Common myeloid progenitor, CD34-positive (primary cell): ENCODE measurements at regions of chr16 and their contacts with region 1.

Region 1: DNA sequence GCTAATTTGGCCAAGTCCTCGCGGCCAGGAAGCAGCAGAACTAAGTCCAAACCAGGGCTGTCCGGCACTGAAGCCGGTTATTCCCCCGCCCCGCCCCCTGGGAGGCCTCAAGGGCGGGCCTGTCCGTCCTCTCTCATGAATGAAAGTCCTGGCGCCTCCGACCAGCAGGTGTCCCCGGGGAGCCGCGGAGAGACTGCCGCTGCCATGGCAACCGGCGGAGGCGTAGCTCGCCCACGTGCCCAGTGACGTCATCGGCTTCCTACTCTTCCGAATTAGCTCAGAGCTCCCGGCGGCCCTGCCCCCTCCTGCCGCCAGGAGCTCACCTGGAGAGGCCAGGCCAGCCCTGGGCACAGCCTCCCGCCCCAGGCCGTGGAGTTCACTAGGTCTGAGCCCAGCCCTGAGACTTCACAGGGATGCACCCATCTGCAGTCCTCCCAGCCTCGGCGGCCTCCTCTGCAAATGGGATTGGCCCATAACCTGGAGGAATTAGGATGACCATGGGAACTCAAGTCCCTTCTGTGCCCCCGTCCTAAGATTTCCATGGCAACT is 1.3 kb downstream of the SPATA2L start:
- DNase-seq: peak; percentile 93 to 96 (median 95)
- H3K4me3 ChIP-seq: peak overlapping the region in 6 of 7 experiments; percentile 61 to 84 (median 72)
- H3K27ac ChIP-seq: peak overlapping the region in 1 of 2 experiments; percentile 66
- H3K4me1 ChIP-seq: peaks cover 2 to 34% (median 33%) of the 10 kb centered on the region in 4 experiments
- H3K27me3 ChIP-seq: no peaks in the 10 kb centered on the region

Region 2: DNA sequence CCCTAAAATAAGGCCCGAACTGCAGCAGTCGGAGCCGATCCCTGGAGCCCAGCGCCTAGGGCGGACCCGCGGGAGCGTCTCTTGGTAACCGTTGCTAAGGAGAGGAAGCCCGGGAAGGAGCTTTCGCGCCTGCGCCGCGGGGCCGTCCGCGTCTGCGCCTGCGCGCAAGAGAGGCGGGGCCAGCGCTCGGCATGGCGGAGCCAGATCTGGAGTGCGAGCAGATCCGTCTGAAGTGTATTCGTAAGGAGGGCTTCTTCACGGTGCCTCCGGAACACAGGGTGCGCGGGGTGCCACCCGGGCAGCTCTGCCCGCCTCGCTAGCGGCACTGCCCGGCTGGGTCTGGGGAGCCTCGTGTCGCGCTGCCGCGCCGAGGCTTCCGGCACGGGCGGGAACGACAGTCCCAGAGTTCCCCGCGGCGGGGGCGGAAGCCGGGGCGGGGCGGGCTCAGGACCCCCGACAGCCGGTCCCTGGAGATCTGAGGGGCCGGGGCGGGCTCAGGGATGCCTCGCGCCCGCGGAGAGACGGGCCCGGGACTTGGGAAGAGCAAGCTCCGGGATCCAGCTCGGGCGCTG is 13.6 kb before region 1 on chr16 and contains the start of gene CDK10:
- CTCF ChIA-PET with region 1: interaction called, 11 read pairs
- POLR2A ChIA-PET with region 1: interaction called, 4 read pairs
- DNase-seq: peak; percentile 83 to 89 (median 84)
- H3K4me3 ChIP-seq: peak within 1 kb of the TSS; percentile 64 to 90 (median 77)
- H3K27ac ChIP-seq: peak within 1 kb of the TSS; percentile 15 to 81
- H3K4me1 ChIP-seq: peaks cover 0 to 14% (median 12%) of the 10 kb centered on the region in 4 experiments
- H3K27me3 ChIP-seq: no peaks in the 10 kb centered on the region

Region 3: GRCh38 chr16:89720813-89721545 is 20.8 kb after region 1 on chr16 and contains the starts of genes VPS9D1 and ZNF276:
- CTCF ChIA-PET with region 1: interaction called, 54 read pairs
- POLR2A ChIA-PET with region 1: interaction called, 4 read pairs
- DNase-seq: peak; percentile 72 to 86 (median 84)
- H3K4me3 ChIP-seq: peak within 1 kb of the TSS; percentile 62 to 90 (median 77)
- H3K27ac ChIP-seq: peak within 1 kb of the TSS; percentile 78 to 89
- H3K4me1 ChIP-seq: peaks cover 3 to 51% (median 47%) of the 10 kb centered on the region in 4 experiments
- H3K27me3 ChIP-seq: no peaks in the 10 kb centered on the region

Region 4: GRCh38 chr16:89741342-89742014 is 41.3 kb after region 1 on chr16:
- CTCF ChIA-PET with region 1: interaction called, 16 read pairs
- POLR2A ChIA-PET with region 1: no interaction called
- DNase-seq: no peak
- H3K4me3 ChIP-seq: no peak overlapping the region
- H3K27ac ChIP-seq: no peak overlapping the region
- H3K4me1 ChIP-seq: no peaks in the 10 kb centered on the region
- H3K27me3 ChIP-seq: no peaks in the 10 kb centered on the region

Region 5: DNA sequence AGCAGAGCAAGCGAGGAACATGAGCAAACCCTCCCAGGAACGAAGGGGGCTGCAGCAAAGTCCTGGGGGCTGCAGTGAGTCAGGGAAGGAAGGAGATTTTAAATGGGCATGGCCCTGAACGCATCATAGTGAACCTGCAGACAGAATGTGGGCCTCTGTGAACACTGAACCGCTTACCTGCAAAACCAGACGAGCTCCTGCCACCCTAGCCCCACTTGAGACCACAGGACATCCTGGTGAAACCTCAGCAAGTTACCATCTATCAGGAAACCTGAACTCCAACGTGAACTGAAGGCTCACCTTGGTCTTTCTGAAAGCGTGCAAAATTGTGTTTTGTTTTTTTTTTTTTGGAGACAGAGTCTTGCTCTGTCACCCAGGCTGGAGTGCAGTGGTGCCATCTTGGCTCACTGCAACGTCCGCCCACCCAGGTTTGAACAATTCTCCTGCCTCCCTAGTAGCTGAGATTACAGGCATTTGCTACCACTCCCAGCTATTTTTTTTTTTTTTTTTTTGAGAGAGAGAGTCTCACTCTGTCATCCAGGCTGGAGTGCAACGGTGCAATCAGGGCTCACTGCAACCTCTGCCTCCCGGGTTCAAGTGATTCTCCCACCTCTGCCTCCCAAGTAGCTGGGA is 85.5 kb after region 1 on chr16:
- CTCF ChIA-PET with region 1: interaction called, 195 read pairs
- POLR2A ChIA-PET with region 1: no interaction called
- DNase-seq: no peak
- H3K4me3 ChIP-seq: no peak overlapping the region
- H3K27ac ChIP-seq: no peak overlapping the region
- H3K4me1 ChIP-seq: no peaks in the 10 kb centered on the region
- H3K27me3 ChIP-seq: no peaks in the 10 kb centered on the region

Region 6: GRCh38 chr16:89860747-89861304 is 160.7 kb after region 1 on chr16:
- CTCF ChIA-PET with region 1: interaction called, 49 read pairs
- POLR2A ChIA-PET with region 1: no interaction called
- DNase-seq: peak; percentile 45 to 62 (median 58)
- H3K4me3 ChIP-seq: no peak overlapping the region
- H3K27ac ChIP-seq: no peak overlapping the region
- H3K4me1 ChIP-seq: peaks cover 0 to 20% (median 16%) of the 10 kb centered on the region in 4 experiments
- H3K27me3 ChIP-seq: no peaks in the 10 kb centered on the region

Region 7: DNA sequence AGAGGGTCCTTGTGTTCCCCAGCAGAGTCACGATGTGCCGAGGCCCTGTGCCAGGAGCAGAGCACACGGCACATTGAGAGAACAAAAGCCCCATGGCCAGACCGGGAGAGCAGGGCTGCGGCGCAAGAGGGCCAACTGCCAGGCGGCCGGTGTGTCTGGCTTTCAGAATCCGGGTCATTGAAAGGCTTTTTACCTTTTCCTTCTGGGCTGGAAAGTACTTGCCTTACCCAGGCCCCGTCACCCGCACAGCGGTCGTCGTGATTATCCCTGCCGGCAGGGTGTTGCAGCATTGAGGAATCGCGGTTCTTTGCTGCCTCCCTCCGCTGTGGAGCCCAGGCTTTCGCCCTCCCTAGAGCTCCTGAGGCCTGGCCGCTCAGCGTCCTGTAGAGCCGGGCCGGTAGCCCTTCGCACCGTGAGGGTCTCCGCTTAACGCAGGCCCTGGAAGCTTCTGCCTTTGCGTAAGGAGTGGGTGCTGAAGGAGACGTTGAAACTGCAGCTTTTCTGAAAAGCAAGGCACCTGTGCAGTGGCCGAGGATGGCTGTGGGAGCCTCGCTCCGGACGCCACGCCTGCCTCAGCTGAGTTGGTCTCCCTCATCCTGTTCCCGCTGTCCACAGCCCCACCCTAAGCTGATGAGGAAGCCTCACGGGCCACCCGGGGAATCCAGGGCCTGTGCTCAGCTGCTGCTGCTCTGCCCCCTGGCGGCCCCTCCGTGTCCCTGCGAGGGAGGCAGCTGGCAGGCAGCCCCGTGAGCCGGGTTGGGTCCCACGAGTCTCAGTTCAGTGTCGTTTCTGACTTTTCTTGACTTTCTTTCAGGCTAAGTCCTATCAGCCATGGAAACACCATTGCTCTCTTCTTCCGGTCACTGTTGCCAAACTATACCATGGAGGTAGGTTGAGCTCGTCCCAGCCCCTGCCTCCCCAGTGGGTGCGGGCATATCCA is 209.9 kb after region 1 on chr16:
- CTCF ChIA-PET with region 1: interaction called, 13 read pairs
- POLR2A ChIA-PET with region 1: no interaction called
- DNase-seq: peak; percentile 60 to 73 (median 69)
- H3K4me3 ChIP-seq: no peak overlapping the region
- H3K27ac ChIP-seq: no peak overlapping the region
- H3K4me1 ChIP-seq: peaks cover 0 to 5% (median under 1%) of the 10 kb centered on the region in 4 experiments
- H3K27me3 ChIP-seq: no peaks in the 10 kb centered on the region